ENCODE measurements at regions of chr5 and their contacts with region 1.

Region 1: GRCh38 chr5:134648425-134649162 is at the start of gene SEC24A:
- DNase-seq: peak; percentile 93
- H3K4me3 ChIP-seq: peak within 1 kb of the TSS; percentile 83
- H3K27ac ChIP-seq: peak within 1 kb of the TSS; percentile 95
- H3K4me1 ChIP-seq: peaks cover 31% of the 10 kb centered on the region
- CTCF ChIP-seq: no peak
- total RNA-seq, gene SEC24A: 5.5 and 5.6 TPM in 2 replicates

Region 2: GRCh38 chr5:134626369-134627014 is 22.1 kb before region 1 on chr5:
- CTCF ChIA-PET with region 1: no interaction called
- POLR2A ChIA-PET with region 1: interaction called, 47 read pairs
- intact Hi-C with region 1: no loop called
- DNase-seq: no peak
- H3K4me3 ChIP-seq: no peak overlapping the region
- H3K27ac ChIP-seq: no peak overlapping the region
- H3K4me1 ChIP-seq: peaks cover 7% of the 10 kb centered on the region
- CTCF ChIP-seq: no peak

Region 3: DNA sequence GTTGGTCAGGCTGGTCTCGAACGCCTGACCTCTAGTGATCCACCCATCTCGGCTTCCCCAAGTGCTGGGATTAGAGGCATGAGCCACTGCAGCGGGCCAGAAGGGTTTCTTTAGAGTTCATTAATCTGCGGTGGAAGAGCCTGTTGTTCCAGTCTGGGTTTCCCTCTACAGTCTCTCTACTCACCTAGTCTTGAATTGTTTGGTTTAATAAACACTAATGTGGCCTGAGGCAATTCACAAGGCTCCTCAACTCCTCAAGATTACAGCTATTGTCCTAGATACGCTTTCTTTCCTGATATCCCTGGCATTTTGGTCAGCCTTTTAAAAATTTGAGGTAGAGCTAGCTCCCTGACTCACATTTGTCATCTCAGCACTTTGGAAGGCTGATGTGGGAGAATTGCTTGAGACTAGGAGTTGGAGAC is 11.4 kb before region 1 on chr5:
- CTCF ChIA-PET with region 1: no interaction called
- POLR2A ChIA-PET with region 1: interaction called, 47 read pairs
- intact Hi-C with region 1: loop called (anchors 1 kb)
- DNase-seq: no peak
- H3K4me3 ChIP-seq: no peak overlapping the region
- H3K27ac ChIP-seq: no peak overlapping the region
- H3K4me1 ChIP-seq: no peaks in the 10 kb centered on the region
- CTCF ChIP-seq: no peak

Measured in OCI-LY7 (cell line).